CD8-positive, alpha-beta memory T cell (primary cell): ENCODE measurements at regions of chr6 and their contacts with region 1.

Region 1: DNA sequence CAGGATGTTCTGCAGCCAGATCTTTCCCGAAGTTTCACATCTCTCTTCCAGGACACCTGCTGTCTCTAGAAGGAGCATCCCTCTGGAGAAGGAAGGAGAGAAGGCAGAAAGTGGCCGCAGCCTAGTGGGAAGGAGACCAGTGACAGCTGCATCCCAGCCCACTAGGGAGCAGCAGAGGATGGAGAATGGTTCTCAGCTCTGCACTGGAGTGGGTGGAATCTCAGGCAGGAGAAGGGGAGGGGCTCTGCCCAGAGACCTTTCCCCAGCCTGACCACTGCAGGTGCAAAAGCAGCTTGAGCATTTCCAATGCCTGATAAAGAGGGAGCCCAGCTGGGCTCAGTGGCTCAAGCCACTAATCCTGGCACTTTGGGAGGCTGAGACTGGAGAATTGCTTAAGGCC is 32.3 kb downstream of the NCR2 start:
- DNase-seq: no peak
- H3K4me3 ChIP-seq: no peak overlapping the region
- H3K4me3 Mint-ChIP-seq: no peak overlapping the region
- H3K27ac ChIP-seq: no peak overlapping the region
- H3K27ac Mint-ChIP-seq: no peak overlapping the region
- H3K4me1 ChIP-seq: no peaks in the 10 kb centered on the region
- H3K4me1 Mint-ChIP-seq: peaks cover 18 to 27% (median 21%) of the 10 kb centered on the region in 3 donors
- H3K27me3 ChIP-seq: peaks cover 17% of the 10 kb centered on the region
- H3K27me3 Mint-ChIP-seq: peaks cover 53 to 57% of the 10 kb centered on the region in 2 donors

Region 2: GRCh38 chr6:41344876-41345275 is 22.8 kb before region 1 on chr6:
- CTCF ChIA-PET with region 1: interaction called, 10 read pairs
- POLR2A ChIA-PET with region 1: no interaction called
- DNase-seq: peak in 3 of 5 donors; percentile 55 to 61 (median 58)
- H3K4me3 ChIP-seq: no peak overlapping the region
- H3K4me3 Mint-ChIP-seq: peak overlapping the region in 6 of 7 donors; percentile 6 to 81 (median 61)
- H3K27ac ChIP-seq: no peak overlapping the region
- H3K27ac Mint-ChIP-seq: peak overlapping the region; percentile 56 to 99 (median 94)
- H3K4me1 ChIP-seq: peaks cover 23% of the 10 kb centered on the region
- H3K4me1 Mint-ChIP-seq: peaks cover 28 to 30% (median 29%) of the 10 kb centered on the region in 3 donors
- H3K27me3 ChIP-seq: no peaks in the 10 kb centered on the region
- H3K27me3 Mint-ChIP-seq: peaks cover 3 to 7% of the 10 kb centered on the region in 2 donors

Region 3: GRCh38 chr6:41591859-41592502 is 224.3 kb after region 1 on chr6:
- CTCF ChIA-PET with region 1: interaction called, 12 read pairs
- POLR2A ChIA-PET with region 1: no interaction called
- DNase-seq: peak; percentile 54 to 82 (median 68)
- H3K4me3 ChIP-seq: no peak overlapping the region
- H3K4me3 Mint-ChIP-seq: no peak overlapping the region
- H3K27ac ChIP-seq: no peak overlapping the region
- H3K27ac Mint-ChIP-seq: peak overlapping the region in 2 of 8 donors; percentile 44 to 48
- H3K4me1 ChIP-seq: no peaks in the 10 kb centered on the region
- H3K4me1 Mint-ChIP-seq: peaks cover 0 to 6% (median 0%) of the 10 kb centered on the region in 3 donors
- H3K27me3 ChIP-seq: no peaks in the 10 kb centered on the region
- H3K27me3 Mint-ChIP-seq: no peaks in the 10 kb centered on the region